ENCODE measurements at regions of chr10 and their contacts with region 1.

Region 1: DNA sequence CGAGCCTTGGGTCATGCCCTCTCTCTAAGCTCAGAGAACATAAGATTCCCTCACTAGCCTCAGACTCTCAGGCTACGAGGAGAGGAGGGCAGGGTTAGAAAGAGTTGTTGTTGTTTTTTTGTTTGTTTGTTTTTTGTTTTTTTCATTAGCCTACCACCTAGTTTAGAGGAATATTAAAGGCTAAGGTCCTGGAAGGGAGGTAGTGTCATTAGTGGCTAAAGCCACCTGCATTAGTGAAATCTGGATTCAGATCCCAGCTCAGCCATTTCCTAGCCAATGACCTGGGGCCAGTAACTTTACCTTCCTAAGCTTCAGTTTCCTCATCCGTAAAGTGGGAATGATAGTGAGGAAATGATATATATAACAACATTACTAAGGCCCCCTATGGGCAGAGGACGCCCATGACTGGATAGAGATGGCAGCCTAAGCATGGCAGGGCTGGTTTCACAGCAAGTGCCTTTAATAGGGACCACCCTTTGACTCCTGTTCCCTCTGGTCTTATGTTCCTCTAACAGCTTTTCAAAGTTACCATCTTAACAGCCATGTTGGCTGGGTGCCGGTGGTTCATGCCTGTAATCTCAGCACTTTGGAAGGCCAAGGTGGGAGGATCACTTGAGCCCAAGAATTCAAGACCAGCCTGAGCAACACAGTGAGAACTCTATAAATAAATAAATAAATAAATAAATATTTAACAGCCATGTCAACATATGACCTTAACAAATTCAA is 5.1 kb downstream of the DDIT4 start:
- DNase-seq: no peak
- H3K4me3 ChIP-seq: no peak overlapping the region
- CTCF ChIP-seq: no peak

Region 2: GRCh38 chr10:72292223-72292691 is 13.4 kb after region 1 on chr10:
- CTCF ChIA-PET with region 1: interaction called, 25 read pairs
- POLR2A ChIA-PET with region 1: interaction called, 44 read pairs
- DNase-seq: no peak
- H3K4me3 ChIP-seq: no peak overlapping the region
- CTCF ChIP-seq: no peak

Region 3: GRCh38 chr10:72331601-72332422 is 53.0 kb after region 1 on chr10:
- CTCF ChIA-PET with region 1: interaction called, 34 read pairs
- POLR2A ChIA-PET with region 1: interaction called, 11 read pairs
- DNase-seq: no peak
- H3K4me3 ChIP-seq: no peak overlapping the region
- CTCF ChIP-seq: peak; percentile 7

Region 4: GRCh38 chr10:72364239-72364777 is 85.5 kb after region 1 on chr10:
- CTCF ChIA-PET with region 1: no interaction called
- POLR2A ChIA-PET with region 1: no interaction called
- DNase-seq: peak; percentile 80
- H3K4me3 ChIP-seq: peak overlapping the region; percentile 12; the same call in 1 of the 2 replicates
- CTCF ChIP-seq: peak; percentile 92

Region 5: GRCh38 chr10:72414642-72415041 is 135.8 kb after region 1 on chr10:
- CTCF ChIA-PET with region 1: no interaction called
- POLR2A ChIA-PET with region 1: no interaction called
- DNase-seq: no peak
- H3K4me3 ChIP-seq: no peak overlapping the region
- CTCF ChIP-seq: no peak

Region 6: GRCh38 chr10:72682626-72683025 is 403.8 kb after region 1 on chr10:
- CTCF ChIA-PET with region 1: no interaction called
- POLR2A ChIA-PET with region 1: no interaction called
- DNase-seq: no peak
- H3K4me3 ChIP-seq: no peak overlapping the region
- CTCF ChIP-seq: no peak

Measured in AG04449 (cell line).